Activated CD4-positive, alpha-beta memory T cell treated with anti-CD3 and anti-CD28 coated beads, Interleukin-2, amount 10 ng/mL, durations not matched to agents 7 days and 5 days (primary cell): ENCODE measurements at regions of chr13 and their contacts with region 1.

Region 1: DNA sequence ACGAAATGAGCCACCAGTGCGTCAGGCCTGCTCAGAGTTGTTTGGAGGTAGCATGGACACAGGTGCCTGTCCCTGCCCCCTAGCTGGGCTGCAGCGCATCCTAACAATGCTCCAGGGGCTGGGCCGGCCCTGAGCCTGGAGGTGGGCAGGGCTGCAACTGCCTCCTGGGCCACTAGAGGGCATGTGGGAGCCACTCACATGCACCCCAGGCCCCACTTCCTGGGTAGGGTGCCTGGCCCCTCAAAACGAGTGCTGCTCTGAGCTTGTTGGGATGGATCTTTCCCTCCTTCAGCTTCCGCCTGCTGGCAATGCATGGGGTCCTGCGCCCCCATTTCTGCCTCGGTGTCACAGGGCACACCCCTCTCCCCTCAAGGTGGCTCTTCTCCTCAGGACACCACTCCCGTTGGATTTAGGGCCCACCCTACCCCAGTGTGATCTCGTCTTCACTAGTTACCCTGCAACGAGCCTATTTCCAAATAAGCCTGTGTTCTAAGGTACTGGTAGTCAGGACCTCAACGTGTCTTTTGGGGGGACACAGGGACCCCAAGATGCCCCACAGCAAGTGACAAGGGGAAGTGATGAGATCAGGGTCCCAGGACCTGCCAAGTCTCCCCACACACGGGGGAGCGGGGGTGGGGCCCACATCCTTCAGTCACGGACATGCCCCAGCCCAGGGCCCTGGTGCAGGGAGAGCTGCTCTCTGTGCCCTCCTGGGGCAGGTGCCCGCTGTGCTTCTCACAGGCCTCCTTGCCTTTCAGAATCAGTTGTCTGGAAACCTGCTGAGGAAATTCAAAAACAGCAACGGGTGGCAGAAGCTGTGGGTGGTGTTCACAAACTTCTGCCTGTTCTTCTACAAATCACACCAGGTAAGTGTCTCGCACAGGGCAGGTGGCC is 131.3 kb downstream of the STK24 start:
- DNase-seq: peak; percentile 82
- H3K4me3 Mint-ChIP-seq: peak overlapping the region; percentile 14
- H3K27ac Mint-ChIP-seq: peak overlapping the region; percentile 54
- H3K4me1 Mint-ChIP-seq: peaks cover 22% of the 10 kb centered on the region
- H3K27me3 Mint-ChIP-seq: no peaks in the 10 kb centered on the region

Region 2: DNA sequence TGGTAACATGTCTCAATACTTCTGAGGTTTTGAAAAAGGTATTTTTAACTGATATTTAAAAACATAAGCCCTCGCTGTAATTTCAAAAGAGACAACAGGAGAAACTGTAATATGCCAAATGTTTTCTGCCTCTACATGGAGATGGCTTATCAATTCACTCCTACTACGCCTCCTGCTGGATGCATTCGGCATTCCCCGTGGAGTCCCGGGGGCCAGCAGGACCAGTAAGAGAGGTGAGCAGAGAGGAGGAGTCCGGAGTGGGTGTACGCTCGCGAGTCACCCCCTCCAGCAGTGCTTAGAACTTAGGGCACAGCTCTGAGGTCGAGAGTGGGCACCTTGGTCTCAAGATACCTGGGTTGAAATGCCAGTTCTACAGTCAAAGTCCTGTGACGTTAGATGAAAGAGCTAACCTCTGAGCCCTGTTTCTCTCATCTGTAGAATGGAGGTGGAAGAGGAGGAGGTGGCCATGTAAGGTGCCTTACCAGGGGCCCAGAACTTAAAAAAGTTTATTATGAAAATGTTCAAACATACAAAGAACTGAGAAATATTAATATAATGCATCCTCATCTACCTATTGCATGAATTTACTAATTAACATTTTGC is 21.1 kb after region 1 on chr13:
- CTCF ChIA-PET with region 1: interaction called, 14 read pairs
- POLR2A ChIA-PET with region 1: no interaction called
- DNase-seq: peak; percentile 42
- H3K4me3 Mint-ChIP-seq: no peak overlapping the region
- H3K27ac Mint-ChIP-seq: no peak overlapping the region
- H3K4me1 Mint-ChIP-seq: peaks cover 16% of the 10 kb centered on the region
- H3K27me3 Mint-ChIP-seq: no peaks in the 10 kb centered on the region

Region 3: DNA sequence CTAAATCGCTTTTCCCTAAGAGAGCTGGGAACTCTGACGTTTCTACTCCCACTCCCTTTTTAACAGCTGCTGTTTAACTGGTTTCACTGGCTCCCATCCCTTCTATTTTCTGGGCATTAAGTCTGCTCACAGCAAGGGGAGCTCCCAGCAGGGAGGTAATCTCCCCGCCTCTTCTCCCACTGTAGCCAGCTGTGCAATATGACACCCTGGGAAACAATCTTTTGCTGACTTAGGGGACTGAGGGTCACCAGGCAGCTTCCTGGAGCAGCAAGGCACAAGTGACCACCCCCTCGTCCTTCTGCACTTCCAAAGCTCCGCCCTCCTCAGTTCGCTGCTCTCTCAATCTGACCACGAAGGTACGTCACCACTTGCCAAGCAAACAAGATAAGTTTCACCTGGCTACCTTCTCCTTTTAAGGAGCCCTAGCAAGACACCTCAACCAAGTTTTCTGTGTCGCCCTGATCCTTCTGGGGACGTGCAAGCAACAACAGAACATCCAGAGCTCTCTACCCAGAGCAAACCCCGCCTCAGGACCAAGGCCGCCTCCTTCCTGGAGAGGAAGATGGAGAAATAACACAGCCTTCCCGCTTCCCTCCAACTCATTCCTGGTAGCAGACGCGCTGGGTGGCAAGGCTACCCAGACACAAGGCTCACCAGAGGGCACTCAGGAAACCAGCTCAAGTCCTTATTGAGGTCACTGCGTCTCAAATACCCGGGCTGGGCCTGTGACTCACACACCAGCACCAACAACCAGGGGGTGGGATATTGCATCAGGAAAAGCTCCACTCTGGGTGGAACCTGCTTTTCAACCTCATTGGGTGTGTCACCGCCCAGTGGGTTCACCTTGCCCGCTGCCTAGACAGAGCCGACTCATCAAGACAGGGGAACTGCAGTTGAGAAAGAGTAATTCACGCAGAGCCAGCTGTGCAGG is 39.0 kb after region 1 on chr13:
- CTCF ChIA-PET with region 1: interaction called, 19 read pairs
- POLR2A ChIA-PET with region 1: interaction called, 6 read pairs
- DNase-seq: peak; percentile 83
- H3K4me3 Mint-ChIP-seq: peak overlapping the region; percentile 51
- H3K27ac Mint-ChIP-seq: peak overlapping the region; percentile 90
- H3K4me1 Mint-ChIP-seq: peaks cover 90% of the 10 kb centered on the region
- H3K27me3 Mint-ChIP-seq: no peaks in the 10 kb centered on the region

Region 4: DNA sequence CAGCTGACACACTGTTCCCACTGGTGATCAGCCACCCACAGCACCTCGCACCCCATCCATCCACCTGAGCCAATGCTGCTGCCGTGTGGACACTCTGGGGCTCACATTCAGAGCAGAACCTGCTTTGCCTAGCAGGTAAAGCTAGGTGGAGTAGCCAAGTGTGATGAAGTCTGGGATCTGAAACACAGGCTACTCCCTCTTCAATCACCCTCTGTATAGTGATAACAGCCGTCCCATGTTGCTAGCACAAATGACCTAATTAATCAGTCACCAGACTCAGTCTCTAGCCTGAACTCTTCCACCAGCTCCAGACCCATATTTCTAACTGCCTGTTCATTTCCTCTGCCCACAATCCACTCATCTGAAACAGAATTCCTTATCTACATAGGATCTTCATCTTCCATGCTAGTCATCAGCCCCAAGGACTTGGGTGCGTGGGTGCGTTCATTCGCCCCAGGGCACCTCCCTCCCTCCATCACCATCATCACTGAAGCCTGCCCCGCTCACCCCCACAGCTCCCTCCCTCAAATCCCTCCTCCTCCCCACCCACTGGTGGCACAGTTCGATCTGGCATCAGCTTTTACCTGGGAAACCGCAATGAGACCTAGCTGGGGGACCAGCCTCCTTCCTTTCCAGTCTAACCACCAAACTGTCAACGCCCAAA is 111.5 kb after region 1 on chr13:
- CTCF ChIA-PET with region 1: interaction called, 11 read pairs
- POLR2A ChIA-PET with region 1: no interaction called
- DNase-seq: no peak
- H3K4me3 Mint-ChIP-seq: peak overlapping the region; percentile 4
- H3K27ac Mint-ChIP-seq: peak overlapping the region; percentile 68
- H3K4me1 Mint-ChIP-seq: peaks cover 76% of the 10 kb centered on the region
- H3K27me3 Mint-ChIP-seq: no peaks in the 10 kb centered on the region

Region 5: GRCh38 chr13:98641075-98641474 is 195.5 kb after region 1 on chr13:
- CTCF ChIA-PET with region 1: interaction called, 12 read pairs
- POLR2A ChIA-PET with region 1: no interaction called
- DNase-seq: no peak
- H3K4me3 Mint-ChIP-seq: no peak overlapping the region
- H3K27ac Mint-ChIP-seq: no peak overlapping the region
- H3K4me1 Mint-ChIP-seq: no peaks in the 10 kb centered on the region
- H3K27me3 Mint-ChIP-seq: peaks cover 17% of the 10 kb centered on the region

Region 6: GRCh38 chr13:98653463-98653985 is 207.9 kb after region 1 on chr13:
- CTCF ChIA-PET with region 1: interaction called, 125 read pairs
- POLR2A ChIA-PET with region 1: interaction called, 8 read pairs
- DNase-seq: peak; percentile 75
- H3K4me3 Mint-ChIP-seq: no peak overlapping the region
- H3K27ac Mint-ChIP-seq: no peak overlapping the region
- H3K4me1 Mint-ChIP-seq: peaks cover 4% of the 10 kb centered on the region
- H3K27me3 Mint-ChIP-seq: peaks cover 2% of the 10 kb centered on the region

Region 7: DNA sequence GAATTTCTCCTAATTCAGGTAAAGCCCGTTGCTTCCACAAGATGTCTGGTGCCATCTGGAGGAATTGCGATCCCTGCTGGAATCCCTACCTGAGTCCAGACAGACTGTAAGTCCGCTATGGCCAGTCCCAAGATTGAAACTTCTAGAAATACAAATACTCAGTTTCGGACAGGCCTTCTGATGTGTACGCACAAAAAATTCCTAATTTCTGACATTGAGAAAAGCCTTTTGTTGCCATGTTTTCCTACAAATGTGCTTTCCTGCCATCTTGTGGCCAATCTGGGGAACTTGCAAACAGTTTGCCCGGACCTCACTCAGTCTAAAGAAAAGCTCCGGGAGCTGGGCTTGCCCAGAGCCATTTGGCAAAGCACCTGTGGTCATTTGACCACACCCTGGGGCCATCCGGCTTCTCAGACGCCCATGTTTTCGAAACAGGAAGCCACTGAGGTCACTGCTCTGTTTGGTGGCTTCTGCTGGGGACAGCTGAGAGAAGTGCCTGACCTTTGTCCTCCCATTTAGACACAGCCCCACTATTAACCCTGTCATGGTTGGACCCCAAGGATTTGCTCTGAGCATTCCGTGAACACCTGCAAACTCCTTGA is 227.5 kb after region 1 on chr13:
- CTCF ChIA-PET with region 1: interaction called, 17 read pairs
- POLR2A ChIA-PET with region 1: interaction called, 4 read pairs
- DNase-seq: peak; percentile 55
- H3K4me3 Mint-ChIP-seq: no peak overlapping the region
- H3K27ac Mint-ChIP-seq: no peak overlapping the region
- H3K4me1 Mint-ChIP-seq: peaks cover 3% of the 10 kb centered on the region
- H3K27me3 Mint-ChIP-seq: peaks cover 5% of the 10 kb centered on the region